ENCODE measurements at regions of chr18 and their contacts with region 1.

Region 1: DNA sequence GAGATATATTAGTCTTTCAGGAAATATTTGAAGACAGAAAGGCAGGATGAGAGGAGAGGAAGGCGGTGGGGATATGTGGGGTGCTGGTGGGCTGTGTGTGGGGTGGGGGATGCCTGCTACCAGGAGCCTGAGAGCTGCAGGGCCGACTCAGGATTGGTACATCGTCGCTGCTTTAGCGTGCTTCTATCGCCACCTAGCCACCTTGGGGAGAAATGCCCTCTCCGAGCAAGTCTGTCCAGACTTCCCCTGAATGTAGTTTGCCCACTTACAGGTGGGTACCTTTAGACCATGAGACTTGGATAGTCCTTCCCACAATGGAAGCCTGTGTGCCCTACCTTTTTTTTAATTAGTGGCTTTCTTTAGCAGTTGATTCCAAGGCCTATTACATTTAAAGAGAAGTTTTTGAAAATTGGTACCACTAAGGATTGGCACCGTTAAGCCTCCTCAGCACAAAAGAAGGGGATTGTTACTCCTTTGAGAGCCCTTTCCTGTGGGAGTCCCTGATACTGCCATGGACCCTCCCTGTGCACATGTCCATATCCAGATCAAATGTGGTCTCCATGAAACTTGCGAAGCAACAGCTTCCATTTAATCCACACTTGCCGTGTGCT is 114.1 kb upstream of the NDUFV2 start:
- DNase-seq: peak; percentile 25
- ATAC-seq: peak; percentile 87
- H3K4me3 Mint-ChIP-seq: no peak overlapping the region
- H3K27ac Mint-ChIP-seq: no peak overlapping the region
- H3K4me1 Mint-ChIP-seq: no peaks in the 10 kb centered on the region
- H3K27me3 Mint-ChIP-seq: peaks cover 3% of the 10 kb centered on the region
- CTCF ChIP-seq: peak; percentile 19

Region 2: DNA sequence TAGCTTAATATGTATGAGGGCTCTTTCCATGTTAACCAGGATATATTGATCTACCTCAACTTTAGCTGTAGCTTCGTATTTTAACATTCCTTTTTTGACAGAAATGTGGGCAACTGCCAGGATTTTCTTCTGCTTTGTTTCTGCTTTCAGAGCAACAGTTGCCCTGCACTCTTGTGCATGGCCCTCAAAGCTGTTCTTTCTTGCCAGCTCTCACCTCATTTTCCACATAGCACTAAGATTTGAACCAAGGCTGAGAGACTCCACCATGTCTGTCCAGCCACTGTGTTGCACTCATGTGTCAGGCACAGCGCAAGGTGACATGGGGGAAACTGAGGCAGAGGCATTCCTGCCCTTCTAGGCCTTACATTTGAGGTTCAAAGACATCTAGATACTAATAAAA is 802.0 kb before region 1 on chr18:
- CTCF ChIA-PET with region 1: no interaction called
- POLR2A ChIA-PET with region 1: no interaction called
- intact Hi-C with region 1: no loop called
- DNase-seq: no peak
- ATAC-seq: no peak
- H3K4me3 Mint-ChIP-seq: no peak overlapping the region
- H3K27ac Mint-ChIP-seq: no peak overlapping the region
- H3K4me1 Mint-ChIP-seq: no peaks in the 10 kb centered on the region
- H3K27me3 Mint-ChIP-seq: no peaks in the 10 kb centered on the region
- CTCF ChIP-seq: no peak

Region 3: DNA sequence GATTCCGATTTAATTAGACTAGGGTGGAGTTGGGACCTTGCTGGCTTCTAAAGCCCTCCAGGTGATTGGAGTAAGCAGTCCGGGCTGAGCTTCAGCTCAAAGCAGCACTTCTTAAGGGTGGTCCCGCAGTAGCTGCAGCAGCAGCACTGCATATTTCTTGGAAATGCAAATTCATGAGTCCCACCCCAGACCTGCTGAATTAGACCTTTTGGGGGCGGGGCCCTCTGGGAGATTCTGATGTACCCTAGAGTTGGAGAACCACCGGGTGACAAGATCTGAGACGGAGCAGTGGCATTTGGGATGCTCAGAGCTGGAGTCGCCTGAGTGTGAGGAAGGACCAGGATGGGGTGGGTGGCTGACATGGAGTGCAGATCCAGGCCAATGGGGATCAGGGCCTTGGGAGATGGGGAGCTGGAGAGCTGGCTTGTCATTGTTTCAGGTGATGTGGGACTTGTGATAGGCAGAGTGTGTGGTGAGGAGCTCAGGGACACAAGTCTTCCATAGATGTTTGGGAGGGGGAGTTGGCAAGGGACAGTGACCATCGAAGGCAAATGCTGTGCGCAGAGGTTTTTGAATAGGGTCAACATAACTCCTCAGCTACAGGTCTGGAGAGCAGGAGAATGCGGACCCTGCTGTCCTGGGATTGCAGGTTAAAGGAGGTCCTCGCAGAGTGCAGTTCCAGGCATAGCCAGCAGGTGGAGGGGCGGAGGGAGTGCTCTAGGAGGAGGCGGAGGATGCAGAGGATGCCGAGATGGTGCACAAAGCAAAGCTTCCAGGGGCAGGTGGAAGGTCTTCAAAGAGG is 510.0 kb before region 1 on chr18:
- CTCF ChIA-PET with region 1: interaction called, 28 read pairs
- POLR2A ChIA-PET with region 1: no interaction called
- intact Hi-C with region 1: loop called (anchors 1 kb)
- DNase-seq: peak; percentile 64
- ATAC-seq: peak; percentile 83
- H3K4me3 Mint-ChIP-seq: no peak overlapping the region
- H3K27ac Mint-ChIP-seq: no peak overlapping the region
- H3K4me1 Mint-ChIP-seq: peaks cover 2% of the 10 kb centered on the region
- H3K27me3 Mint-ChIP-seq: peaks cover 20% of the 10 kb centered on the region
- CTCF ChIP-seq: no peak

Region 4: GRCh38 chr18:8696749-8697211 is 291.6 kb before region 1 on chr18:
- CTCF ChIA-PET with region 1: interaction called, 49 read pairs
- POLR2A ChIA-PET with region 1: no interaction called
- intact Hi-C with region 1: loop called (anchors 1 kb)
- DNase-seq: peak; percentile 74
- ATAC-seq: peak; percentile 82
- H3K4me3 Mint-ChIP-seq: no peak overlapping the region
- H3K27ac Mint-ChIP-seq: no peak overlapping the region
- H3K4me1 Mint-ChIP-seq: peaks cover 12% of the 10 kb centered on the region
- H3K27me3 Mint-ChIP-seq: no peaks in the 10 kb centered on the region
- CTCF ChIP-seq: peak; percentile 62

Region 5: DNA sequence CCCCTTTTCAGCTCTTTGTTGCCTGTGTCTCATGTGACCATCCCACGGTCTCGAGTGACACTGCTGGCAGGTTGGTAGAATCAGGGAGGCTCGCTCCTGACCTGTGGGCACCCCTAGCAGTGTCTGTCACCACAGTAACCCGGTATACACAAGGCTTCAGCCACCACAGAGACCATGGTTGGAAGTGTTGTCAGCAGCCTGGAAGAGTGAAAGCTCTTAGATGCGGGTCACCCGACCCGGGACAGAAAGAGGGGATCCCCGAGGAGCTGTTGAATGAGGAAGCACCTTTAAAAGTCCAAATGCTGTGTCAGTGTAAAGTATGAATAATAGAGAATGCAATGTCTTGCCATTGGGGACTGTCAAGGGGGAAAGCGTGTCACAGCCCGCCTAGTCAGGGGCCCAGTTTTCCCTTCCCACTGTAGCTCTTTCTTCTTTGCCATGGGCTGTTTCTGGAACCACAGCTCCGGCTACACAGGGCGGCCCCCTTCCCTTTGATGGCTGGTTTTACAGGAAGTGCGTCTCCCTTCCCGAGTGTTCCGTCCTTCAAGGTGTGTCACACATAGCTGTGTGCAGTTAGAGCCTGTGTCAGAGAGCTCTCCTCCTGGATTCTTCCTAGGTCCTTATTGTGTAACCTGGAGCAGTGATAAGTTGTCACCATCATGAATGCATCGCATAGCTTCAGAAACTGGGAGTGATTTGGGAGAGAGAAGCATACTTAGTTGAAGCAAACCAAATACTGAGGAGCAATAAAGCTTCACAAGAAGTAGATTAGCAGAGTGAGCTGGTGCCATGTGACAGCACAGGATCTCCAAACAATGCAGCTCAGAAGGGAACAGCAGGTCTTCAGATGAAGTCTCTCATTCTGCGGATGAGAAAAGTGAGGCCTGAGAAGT is 201.6 kb before region 1 on chr18:
- CTCF ChIA-PET with region 1: interaction called, 3 read pairs
- POLR2A ChIA-PET with region 1: no interaction called
- intact Hi-C with region 1: loop called (anchors 10 kb)
- DNase-seq: no peak
- ATAC-seq: peak; percentile 65
- H3K4me3 Mint-ChIP-seq: peak overlapping the region; percentile 53
- H3K27ac Mint-ChIP-seq: peak overlapping the region; percentile 19
- H3K4me1 Mint-ChIP-seq: peaks cover 11% of the 10 kb centered on the region
- H3K27me3 Mint-ChIP-seq: no peaks in the 10 kb centered on the region
- CTCF ChIP-seq: no peak

Region 6: DNA sequence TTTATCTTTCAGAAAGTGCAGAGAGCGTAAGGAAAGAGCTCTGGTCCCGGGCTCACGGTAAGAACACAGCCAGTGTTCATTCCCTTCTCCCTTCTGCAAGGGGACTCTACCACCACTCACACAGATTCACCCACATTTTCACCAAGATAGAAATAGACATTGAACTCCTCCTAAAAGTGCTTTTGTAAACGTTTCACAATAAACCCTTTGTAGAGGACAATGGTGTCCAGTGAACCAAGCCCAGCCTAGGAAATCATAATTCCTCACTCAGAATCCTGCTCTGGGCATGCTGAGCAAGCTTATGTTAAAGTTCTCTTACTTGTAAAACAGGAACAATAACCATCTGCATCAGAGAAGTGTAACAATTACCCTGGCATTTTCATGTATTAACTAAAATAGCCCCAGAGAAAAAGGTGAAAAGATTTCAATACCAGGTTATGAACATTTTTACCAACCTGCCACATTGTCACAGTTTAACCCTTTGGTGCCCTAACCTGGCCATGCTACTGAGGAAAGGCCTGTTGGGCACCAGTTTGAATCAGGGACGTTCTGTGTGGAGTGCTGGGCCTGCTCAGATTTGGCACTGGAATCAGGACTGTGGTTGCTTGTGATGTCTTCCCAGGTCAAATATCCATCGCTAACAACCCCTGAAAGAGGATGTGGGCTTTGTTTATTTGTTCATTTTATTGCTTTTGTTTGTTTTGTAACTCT is 91.6 kb after region 1 on chr18:
- CTCF ChIA-PET with region 1: no interaction called
- POLR2A ChIA-PET with region 1: no interaction called
- intact Hi-C with region 1: no loop called
- DNase-seq: no peak
- ATAC-seq: no peak
- H3K4me3 Mint-ChIP-seq: no peak overlapping the region
- H3K27ac Mint-ChIP-seq: no peak overlapping the region
- H3K4me1 Mint-ChIP-seq: peaks cover 19% of the 10 kb centered on the region
- H3K27me3 Mint-ChIP-seq: no peaks in the 10 kb centered on the region
- CTCF ChIP-seq: no peak

Region 7: DNA sequence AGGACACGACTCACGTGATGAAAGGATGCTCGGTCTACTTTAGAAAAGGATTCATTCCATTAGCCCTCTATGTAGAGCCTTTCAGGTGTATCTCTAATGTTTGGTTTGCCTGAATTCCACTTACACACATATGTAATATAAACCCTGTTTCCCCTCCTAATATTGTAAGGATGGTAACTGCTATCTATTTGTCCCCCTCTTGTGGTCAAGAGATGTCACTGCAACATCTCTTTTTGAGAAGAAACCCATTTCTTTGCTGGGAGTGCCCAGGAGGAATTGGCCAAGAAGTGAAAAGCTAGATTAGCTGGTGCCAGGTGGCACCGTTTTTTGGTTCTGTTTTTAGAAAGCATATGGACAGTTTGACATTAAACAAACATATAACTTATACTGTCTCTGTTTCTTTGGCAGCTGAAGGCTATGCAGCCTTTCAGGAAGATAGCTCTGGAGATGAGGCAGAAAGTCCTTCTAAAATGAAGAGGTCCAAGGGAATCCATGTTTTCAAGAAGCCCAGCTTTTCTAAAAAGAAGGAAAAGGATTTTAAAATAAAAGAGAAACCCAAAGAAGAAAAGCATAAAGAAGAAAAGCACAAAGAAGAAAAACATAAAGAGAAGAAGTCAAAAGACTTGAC is 528.2 kb after region 1 on chr18:
- CTCF ChIA-PET with region 1: interaction called, 6 read pairs
- POLR2A ChIA-PET with region 1: no interaction called
- intact Hi-C with region 1: loop called (anchors 2 kb)
- DNase-seq: no peak
- ATAC-seq: peak; percentile 64
- H3K4me3 Mint-ChIP-seq: no peak overlapping the region
- H3K27ac Mint-ChIP-seq: no peak overlapping the region
- H3K4me1 Mint-ChIP-seq: peaks cover 5% of the 10 kb centered on the region
- H3K27me3 Mint-ChIP-seq: no peaks in the 10 kb centered on the region
- CTCF ChIP-seq: peak; percentile 89

Measured in activated B cell treated with CpG ODN at 0.5 μM for 24 hours (primary cell).